HCT116 (cell line): ENCODE measurements at regions of chr4 and their contacts with region 1.

Region 1: DNA sequence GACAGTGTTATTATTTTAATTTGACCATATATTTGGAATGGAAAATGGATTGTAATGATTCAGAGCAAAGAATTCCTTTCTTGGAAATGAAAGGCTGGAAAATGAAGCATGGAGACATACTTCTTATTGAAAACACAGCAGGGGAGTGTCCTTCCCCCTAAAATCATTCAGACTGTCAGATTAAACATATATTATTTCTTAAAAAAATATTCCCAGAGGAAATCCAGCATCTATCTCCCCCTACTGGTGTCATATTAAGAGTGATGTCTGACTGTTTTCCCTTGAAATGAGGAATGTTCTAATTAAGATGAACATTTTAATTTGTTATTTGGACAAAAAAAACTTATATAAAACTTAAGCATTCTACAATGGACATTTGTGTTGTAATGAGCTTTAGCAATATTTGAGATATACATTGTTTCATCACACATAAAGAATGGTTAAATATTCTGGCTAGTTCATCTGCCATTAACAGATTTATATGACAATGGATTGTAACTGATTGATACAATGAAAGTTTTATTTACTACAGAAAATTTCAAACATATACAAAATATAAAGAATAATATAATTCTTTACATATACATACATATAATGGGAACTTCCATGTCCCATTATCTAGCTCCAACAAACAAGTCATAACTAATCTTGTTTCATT is 264.6 kb downstream of the SPRY1 start:
- DNase-seq: peak; percentile 21
- ATAC-seq: no peak
- H3K4me3 ChIP-seq: no peak overlapping the region
- H3K27ac ChIP-seq: no peak overlapping the region
- H3K4me1 ChIP-seq: no peaks in the 10 kb centered on the region
- H3K27me3 ChIP-seq: no peaks in the 10 kb centered on the region
- CTCF ChIP-seq: peak; percentile 54 to 73 (median 65); a peak in 5 of 6 replicates
- POLR2A ChIP-seq: no peak
- RAD21 ChIP-seq: peak; percentile 74

Region 2: DNA sequence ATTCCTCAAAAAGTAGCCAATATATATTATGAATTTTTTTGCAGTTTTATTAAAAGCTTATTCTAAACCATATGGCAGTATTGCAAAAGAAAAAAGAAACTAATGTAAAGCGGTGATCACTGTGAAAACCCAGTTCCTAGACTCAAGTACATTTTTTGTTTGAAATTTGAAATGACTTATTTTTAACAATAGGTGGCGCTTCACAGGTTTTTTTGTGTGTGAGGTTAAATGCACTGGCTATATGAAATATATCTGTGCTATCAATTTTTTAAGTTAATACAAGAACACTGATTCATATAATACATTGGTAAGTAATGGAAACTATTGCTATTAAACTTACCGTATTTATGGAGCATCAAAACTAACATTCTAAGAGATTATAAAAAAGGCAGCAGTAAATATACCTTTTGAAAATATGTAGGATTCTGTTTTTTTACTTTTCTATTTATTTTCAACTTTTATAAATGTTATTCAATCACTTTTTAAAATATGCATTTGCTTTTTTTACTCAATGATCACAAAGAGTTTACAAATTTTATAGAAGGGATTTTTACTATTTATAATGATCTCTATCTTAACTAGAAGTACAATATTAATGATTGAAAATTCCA is 270.3 kb before region 1 on chr4:
- CTCF ChIA-PET with region 1: interaction called, 5 read pairs
- POLR2A ChIA-PET with region 1: no interaction called
- RAD21 ChIA-PET with region 1: no interaction called
- intact Hi-C with region 1: loop called (anchors 2 kb)
- DNase-seq: peak; percentile 4
- ATAC-seq: no peak; the same call in 1 of the 2 replicates
- H3K4me3 ChIP-seq: no peak overlapping the region
- H3K27ac ChIP-seq: no peak overlapping the region
- H3K4me1 ChIP-seq: no peaks in the 10 kb centered on the region
- H3K27me3 ChIP-seq: no peaks in the 10 kb centered on the region
- CTCF ChIP-seq: peak; percentile 32 to 60 (median 56); a peak in 5 of 6 replicates
- POLR2A ChIP-seq: no peak
- RAD21 ChIP-seq: peak; percentile 55